ENCODE measurements at regions of chr20 and their contacts with region 1.

Region 1: GRCh38 chr20:5191829-5192569 is 65.2 kb downstream of the CDS2 start:
- DNase-seq: peak; percentile 61
- ATAC-seq: peak; percentile 79
- H3K4me3 ChIP-seq: peak overlapping the region; percentile 8; the same call in 1 of the 2 replicates
- H3K27ac ChIP-seq: peak overlapping the region; percentile 16
- H3K4me1 ChIP-seq: peaks cover 34% of the 10 kb centered on the region
- H3K27me3 ChIP-seq: no peaks in the 10 kb centered on the region
- CTCF ChIP-seq: peak; percentile 67 to 82 (median 80)
- EP300 ChIP-seq: no peak
- POLR2A ChIP-seq: no peak
- RAD21 ChIP-seq: peak; percentile 93

Region 2: DNA sequence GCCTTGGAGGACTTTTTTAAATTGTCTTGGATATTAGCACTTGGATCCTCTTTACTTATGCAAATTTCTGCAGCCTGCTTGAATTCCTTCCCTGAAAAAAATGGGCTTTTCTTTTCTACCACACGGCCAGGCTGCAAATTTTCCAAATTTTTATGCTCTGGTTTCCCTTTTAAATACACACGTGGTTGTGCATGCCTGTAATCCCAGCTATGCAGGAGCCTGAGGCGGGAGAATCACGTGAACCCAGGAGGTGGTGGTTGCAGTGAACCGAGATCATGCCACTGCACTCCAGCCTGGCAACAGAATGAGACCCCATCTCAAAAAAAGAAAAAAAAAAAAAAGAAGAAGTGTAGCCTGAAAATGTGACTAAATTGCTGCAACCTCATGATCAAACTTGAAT is 546.4 kb before region 1 on chr20:
- CTCF ChIA-PET with region 1: no interaction called
- POLR2A ChIA-PET with region 1: no interaction called
- RAD21 ChIA-PET with region 1: no interaction called
- SMC1A ChIA-PET with region 1: no interaction called
- in situ Hi-C with region 1: no loop called
- intact Hi-C with region 1: no loop called
- DNase-seq: no peak
- ATAC-seq: no peak
- H3K4me3 ChIP-seq: no peak overlapping the region
- H3K27ac ChIP-seq: no peak overlapping the region
- H3K4me1 ChIP-seq: no peaks in the 10 kb centered on the region
- H3K27me3 ChIP-seq: no peaks in the 10 kb centered on the region
- CTCF ChIP-seq: no peak
- EP300 ChIP-seq: no peak
- POLR2A ChIP-seq: no peak
- RAD21 ChIP-seq: no peak

Region 3: DNA sequence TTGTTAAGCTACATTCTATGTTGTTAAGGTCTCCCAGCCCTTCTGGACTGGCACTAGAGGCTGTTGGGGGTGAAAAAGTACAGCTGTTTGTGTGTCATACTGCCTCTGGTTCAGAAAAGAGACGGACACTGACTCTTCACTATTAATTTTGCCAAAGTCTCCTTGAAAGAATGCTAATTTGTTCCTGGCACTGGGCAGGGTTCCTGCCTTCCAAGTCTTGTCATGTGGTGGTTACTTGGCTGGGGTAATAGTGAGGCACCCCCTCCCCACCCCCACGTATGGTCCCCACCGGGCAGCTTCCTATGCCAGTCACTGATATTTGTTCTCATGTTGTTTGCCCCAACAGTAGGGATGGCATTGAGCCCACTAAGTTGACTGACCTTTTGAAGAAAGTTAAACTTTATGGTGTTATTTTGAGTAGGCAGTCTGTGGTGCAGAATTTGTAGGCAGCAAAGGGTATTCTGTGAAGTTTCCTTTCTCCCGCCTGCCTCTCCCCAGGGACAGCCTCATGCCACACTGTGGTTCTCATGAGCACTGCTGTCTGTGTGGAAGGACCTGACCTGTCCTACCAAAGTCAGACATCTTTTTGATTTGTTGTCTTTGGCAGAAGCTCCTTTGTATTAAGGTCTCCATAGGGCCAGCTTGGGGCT is 56.5 kb before region 1 on chr20:
- CTCF ChIA-PET with region 1: interaction called, 386 read pairs
- POLR2A ChIA-PET with region 1: interaction called, 6 read pairs
- RAD21 ChIA-PET with region 1: interaction called, 17 read pairs
- SMC1A ChIA-PET with region 1: interaction called, 19 read pairs
- in situ Hi-C with region 1: no loop called
- intact Hi-C with region 1: no loop called
- DNase-seq: peak; percentile 42
- ATAC-seq: peak; percentile 87
- H3K4me3 ChIP-seq: no peak overlapping the region
- H3K27ac ChIP-seq: no peak overlapping the region; the same call in 1 of the 2 replicates
- H3K4me1 ChIP-seq: peaks cover 2% of the 10 kb centered on the region; the same call in 1 of the 2 replicates
- H3K27me3 ChIP-seq: no peaks in the 10 kb centered on the region
- CTCF ChIP-seq: no peak
- EP300 ChIP-seq: no peak
- POLR2A ChIP-seq: no peak
- RAD21 ChIP-seq: no peak

Region 4: DNA sequence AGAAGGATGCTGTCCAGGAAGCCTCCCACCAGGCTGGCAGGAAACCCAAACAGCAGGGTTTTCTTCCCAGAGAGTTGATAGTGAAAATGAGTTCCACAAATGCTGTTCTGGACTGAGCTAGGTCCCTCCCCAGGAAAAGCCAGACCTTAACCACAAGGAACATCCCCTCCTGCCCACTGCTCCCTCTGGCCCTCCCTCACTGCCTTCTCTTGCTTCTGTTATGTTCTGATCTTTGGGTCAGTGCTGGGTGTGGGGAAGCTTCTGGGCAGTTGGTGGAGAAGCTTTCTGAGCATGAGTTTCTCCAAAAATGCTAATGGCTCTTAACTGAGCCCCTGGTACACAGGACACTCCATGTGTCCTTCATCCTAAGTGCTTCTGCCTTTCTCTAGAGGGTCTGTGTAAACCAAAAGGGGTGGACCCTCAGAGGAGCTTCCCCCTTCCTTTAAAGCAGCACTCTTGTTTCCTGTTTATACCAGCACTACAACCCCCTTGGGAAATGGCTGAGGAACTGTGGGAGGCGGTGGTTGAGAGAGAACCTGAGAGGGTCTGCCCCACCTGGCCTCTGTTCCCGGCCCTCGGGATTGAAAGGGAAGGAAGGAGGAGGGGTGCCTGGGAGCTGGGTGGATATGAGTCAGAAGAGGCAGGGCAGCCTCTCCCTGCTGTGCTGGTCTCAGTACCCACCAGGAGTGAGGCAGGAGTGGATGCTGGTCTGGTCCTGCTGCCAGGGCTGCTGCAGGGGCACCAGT is 23.2 kb before region 1 on chr20:
- CTCF ChIA-PET with region 1: interaction called, 18 read pairs
- POLR2A ChIA-PET with region 1: no interaction called
- RAD21 ChIA-PET with region 1: interaction called, 25 read pairs
- SMC1A ChIA-PET with region 1: interaction called, 13 read pairs
- in situ Hi-C with region 1: no loop called
- intact Hi-C with region 1: loop called (anchors 2 kb)
- DNase-seq: no peak
- ATAC-seq: peak; percentile 7
- H3K4me3 ChIP-seq: no peak overlapping the region
- H3K27ac ChIP-seq: peak overlapping the region; percentile 27
- H3K4me1 ChIP-seq: peaks cover 56% of the 10 kb centered on the region
- H3K27me3 ChIP-seq: no peaks in the 10 kb centered on the region
- CTCF ChIP-seq: no peak
- EP300 ChIP-seq: no peak
- POLR2A ChIP-seq: no peak
- RAD21 ChIP-seq: no peak

Region 5: GRCh38 chr20:5205348-5206210 is 13.6 kb after region 1 on chr20:
- CTCF ChIA-PET with region 1: interaction called, 31 read pairs
- POLR2A ChIA-PET with region 1: no interaction called
- RAD21 ChIA-PET with region 1: interaction called, 16 read pairs
- SMC1A ChIA-PET with region 1: interaction called, 5 read pairs
- in situ Hi-C with region 1: no loop called
- intact Hi-C with region 1: no loop called
- DNase-seq: no peak
- ATAC-seq: peak; percentile 100
- H3K4me3 ChIP-seq: no peak overlapping the region
- H3K27ac ChIP-seq: no peak overlapping the region
- H3K4me1 ChIP-seq: no peaks in the 10 kb centered on the region
- H3K27me3 ChIP-seq: no peaks in the 10 kb centered on the region
- CTCF ChIP-seq: peak; percentile 88 to 89 (median 89)
- EP300 ChIP-seq: no peak
- POLR2A ChIP-seq: no peak
- RAD21 ChIP-seq: peak; percentile 76

Region 6: GRCh38 chr20:5279661-5280060 is 87.7 kb after region 1 on chr20:
- CTCF ChIA-PET with region 1: no interaction called
- POLR2A ChIA-PET with region 1: no interaction called
- RAD21 ChIA-PET with region 1: no interaction called
- SMC1A ChIA-PET with region 1: no interaction called
- in situ Hi-C with region 1: no loop called
- intact Hi-C with region 1: no loop called
- DNase-seq: no peak
- ATAC-seq: no peak
- H3K4me3 ChIP-seq: no peak overlapping the region
- H3K27ac ChIP-seq: no peak overlapping the region
- H3K4me1 ChIP-seq: no peaks in the 10 kb centered on the region
- H3K27me3 ChIP-seq: no peaks in the 10 kb centered on the region; a peak in 1 of 4 replicates
- CTCF ChIP-seq: no peak
- EP300 ChIP-seq: no peak
- POLR2A ChIP-seq: no peak
- RAD21 ChIP-seq: no peak